ENCODE measurements at regions of chr6 and their contacts with region 1.

Region 1: DNA sequence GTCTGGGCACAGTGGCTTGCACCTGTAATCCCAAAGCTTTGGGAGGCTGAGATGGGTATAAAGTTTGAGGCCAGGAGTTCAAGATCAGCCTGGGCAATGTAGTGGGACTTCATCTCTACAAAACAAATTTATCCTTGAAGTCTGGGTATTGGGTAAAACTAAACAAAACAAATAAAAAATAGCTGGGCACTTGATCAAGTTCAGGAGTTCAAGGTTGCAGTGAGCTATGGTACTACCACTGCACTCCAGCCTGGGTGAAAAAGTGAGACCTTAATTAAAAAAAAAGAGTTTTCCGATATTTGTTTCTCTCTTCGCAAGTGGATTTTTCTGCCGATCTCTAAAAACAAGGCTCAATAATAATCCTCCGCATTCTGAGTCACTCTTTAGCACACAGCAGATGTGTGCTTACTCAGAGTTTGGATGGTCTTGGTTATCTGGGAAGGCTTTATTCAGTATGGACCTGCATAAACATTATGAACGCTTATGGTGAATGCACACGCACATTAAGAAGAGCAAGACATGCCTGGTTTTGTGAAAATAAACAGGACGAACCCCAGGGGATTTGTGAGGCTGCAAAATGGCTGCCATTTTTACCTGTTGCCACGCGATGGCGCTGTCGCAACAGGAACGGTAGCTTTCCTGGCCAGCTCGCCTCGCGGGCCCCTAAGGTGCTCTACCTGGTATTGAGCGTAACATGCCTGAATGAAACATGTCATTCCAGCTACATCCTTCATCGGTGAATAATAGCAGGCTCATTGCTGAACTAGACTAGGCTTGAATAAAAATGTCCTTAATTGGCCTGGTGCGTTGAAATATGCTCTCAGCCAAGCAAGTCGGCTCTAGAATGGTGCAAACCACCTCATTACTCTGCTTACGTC is 6.0 kb downstream of the OPN5 start:
- DNase-seq: peak; percentile 52
- CTCF ChIP-seq: peak; percentile 95

Region 2: GRCh38 chr6:47669684-47670513 is 118.0 kb before region 1 on chr6:
- CTCF ChIA-PET with region 1: no interaction called
- POLR2A ChIA-PET with region 1: no interaction called
- DNase-seq: no peak
- CTCF ChIP-seq: no peak

Region 3: DNA sequence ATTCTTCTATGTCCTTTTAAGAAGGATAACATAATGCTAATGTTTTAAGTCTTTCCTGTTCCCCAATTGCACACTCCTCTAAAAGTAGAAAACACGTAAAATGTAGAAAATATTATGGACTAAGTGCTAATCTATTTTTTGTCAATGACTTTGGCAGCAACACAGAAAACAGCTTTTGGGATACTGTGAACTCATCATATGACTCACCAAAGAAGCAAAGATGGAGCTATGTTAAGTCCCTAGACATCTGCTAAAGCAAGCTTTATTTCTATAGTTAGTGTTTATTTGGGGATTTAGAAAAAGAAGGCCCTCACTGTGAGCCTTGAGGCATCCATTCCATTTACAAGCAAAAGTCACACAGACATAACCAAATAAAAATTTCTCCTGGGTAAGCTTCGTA is 17.0 kb after region 1 on chr6:
- CTCF ChIA-PET with region 1: interaction called, 39 read pairs
- POLR2A ChIA-PET with region 1: no interaction called
- DNase-seq: no peak
- CTCF ChIP-seq: no peak

Region 4: DNA sequence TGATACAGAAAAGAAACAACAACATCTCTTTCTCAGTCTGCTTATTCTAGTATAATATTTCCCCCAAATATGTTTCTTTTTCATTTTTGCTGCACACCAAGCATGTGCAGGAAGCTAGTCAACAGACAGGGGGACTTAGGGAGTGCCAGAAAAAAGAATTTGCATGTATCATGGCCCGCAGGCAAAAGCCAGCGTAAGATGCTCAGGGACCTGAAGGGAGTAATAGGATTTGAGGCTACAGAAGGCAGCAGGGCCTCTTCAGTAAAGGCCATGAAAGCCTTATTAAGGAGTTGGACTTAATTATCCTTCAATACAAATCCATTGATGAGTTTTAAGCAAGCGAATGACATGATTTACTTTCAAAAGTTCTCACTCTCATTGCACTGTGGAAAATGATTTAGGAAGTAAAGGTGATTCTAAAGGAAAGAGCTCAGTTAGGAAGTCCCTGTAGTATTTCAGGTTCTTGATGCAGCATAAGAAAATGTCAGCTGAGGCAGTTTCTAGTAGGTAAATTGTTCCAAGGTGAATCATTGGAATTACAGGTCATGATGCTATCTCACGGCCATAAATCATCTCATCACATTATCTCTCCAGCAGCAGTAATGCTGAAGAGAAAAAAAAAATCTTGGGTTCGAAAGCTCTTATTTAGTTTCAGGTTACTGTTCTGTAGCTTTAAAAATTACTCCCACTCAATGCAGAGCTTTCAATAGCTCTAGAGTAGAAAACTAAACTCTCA is 228.3 kb after region 1 on chr6:
- CTCF ChIA-PET with region 1: no interaction called
- POLR2A ChIA-PET with region 1: no interaction called
- DNase-seq: no peak
- CTCF ChIP-seq: no peak

Region 5: GRCh38 chr6:48552905-48553304 is 765.0 kb after region 1 on chr6:
- CTCF ChIA-PET with region 1: no interaction called
- POLR2A ChIA-PET with region 1: no interaction called
- DNase-seq: no peak
- CTCF ChIP-seq: no peak

Region 6: GRCh38 chr6:48765352-48765961 is 977.6 kb after region 1 on chr6:
- CTCF ChIA-PET with region 1: interaction called, 26 read pairs
- POLR2A ChIA-PET with region 1: no interaction called
- DNase-seq: peak; percentile 7
- CTCF ChIP-seq: peak; percentile 16

Region 7: GRCh38 chr6:49409951-49410542 is 1622.2 kb after region 1 on chr6:
- CTCF ChIA-PET with region 1: interaction called, 68 read pairs
- POLR2A ChIA-PET with region 1: no interaction called
- DNase-seq: peak; percentile 38
- CTCF ChIP-seq: peak; percentile 90

Measured in GM10248 (cell line).